ENCODE measurements at regions of chr18 and their contacts with region 1.

Region 1: DNA sequence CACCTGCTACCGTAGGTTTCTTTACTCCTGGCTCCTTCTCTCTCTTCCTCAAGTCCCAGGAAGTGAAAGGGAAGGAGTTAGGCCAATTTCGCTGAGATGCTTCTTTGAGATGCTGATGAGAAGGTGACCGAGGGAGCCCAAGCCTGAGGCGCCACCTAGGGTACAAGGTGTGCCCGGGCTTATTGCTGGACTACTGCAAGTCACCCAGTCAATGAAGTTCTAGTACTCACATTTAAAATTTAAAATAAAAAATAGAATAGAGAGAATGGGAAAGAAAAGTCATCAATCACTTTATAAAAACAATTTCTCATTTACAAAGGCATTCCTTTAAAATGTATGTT is 45.3 kb downstream of the ACAA2 start:
- DNase-seq: peak; percentile 75
- ATAC-seq: peak; percentile 83
- H3K4me3 ChIP-seq: no peak overlapping the region
- H3K27ac ChIP-seq: no peak overlapping the region
- H3K4me1 ChIP-seq: no peaks in the 10 kb centered on the region
- H3K27me3 ChIP-seq: no peaks in the 10 kb centered on the region
- CTCF ChIP-seq: peak; percentile 58

Region 2: DNA sequence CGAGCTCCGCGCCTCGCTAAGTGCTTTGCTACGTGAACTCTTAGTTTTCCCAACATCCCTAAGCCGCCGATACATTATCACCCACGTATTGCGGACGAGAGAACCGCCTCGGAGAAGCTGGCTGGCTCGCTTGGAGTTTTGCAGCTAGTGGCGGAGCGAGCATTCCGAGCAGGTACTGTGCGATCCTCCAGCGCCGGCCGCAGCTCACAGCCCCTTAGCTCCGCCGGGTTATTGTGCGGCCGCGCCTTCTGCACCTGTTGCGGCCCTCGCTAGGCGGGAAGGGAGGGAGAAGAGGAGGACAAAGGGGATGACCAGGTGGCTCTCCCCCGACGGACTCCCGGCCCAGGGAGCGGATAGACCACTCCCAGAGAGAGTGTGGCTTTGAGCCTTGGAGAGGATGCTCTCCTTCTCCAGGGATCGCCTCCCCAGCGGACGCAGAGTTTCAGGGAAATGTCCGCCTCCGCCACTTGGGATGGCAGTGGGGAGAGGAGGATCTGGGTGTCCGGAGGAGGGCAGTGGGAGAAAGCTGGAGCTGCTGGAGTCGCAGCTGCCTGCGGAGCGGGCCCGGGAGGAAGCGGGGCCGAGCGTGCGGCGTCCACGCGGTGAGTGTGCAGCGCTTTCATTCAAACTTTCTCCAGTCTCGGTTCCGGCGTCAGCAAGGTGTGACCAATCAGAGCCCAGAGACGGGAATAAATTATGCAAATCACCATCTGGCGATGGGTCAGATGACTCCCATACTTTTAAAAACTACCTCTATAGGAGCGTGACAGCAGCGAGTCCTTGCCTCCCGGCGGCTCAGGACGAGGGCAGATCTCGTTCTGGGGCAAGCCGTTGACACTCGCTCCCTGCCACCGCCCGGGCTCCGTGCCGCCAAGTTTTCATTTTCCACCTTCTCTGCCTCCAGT is 206.5 kb before region 1 on chr18 and contains the start of gene LIPG:
- intact Hi-C with region 1: loop called (anchors 10 kb)
- DNase-seq: peak; percentile 69
- ATAC-seq: peak; percentile 83
- H3K4me3 ChIP-seq: peak within 1 kb of the TSS; percentile 50
- H3K27ac ChIP-seq: no peak within 1 kb of the TSS
- H3K4me1 ChIP-seq: peaks cover 23% of the 10 kb centered on the region
- H3K27me3 ChIP-seq: peaks cover 36% of the 10 kb centered on the region
- CTCF ChIP-seq: no peak
- total RNA-seq, gene LIPG: 10.2 TPM

Region 3: GRCh38 chr18:49697757-49698524 is 70.1 kb before region 1 on chr18:
- intact Hi-C with region 1: no loop called
- DNase-seq: no peak
- ATAC-seq: peak; percentile 78
- H3K4me3 ChIP-seq: no peak overlapping the region
- H3K27ac ChIP-seq: no peak overlapping the region
- H3K4me1 ChIP-seq: peaks cover 6% of the 10 kb centered on the region
- H3K27me3 ChIP-seq: no peaks in the 10 kb centered on the region
- CTCF ChIP-seq: no peak